Dorsolateral prefrontal cortex (tissue), 120 donors: ENCODE measurements at regions of chr15 and their contacts with region 1.

Region 1: GRCh38 chr15:33660151-33660550 is 308.1 kb upstream of the CHRM5 start:
- DNase-seq: no peak
- H3K4me3 ChIP-seq: no peak overlapping the region
- H3K27ac ChIP-seq: no peak overlapping the region
- H3K27me3 ChIP-seq: peaks cover 0 to 3% (median 0%) of the 10 kb centered on the region in 45 donors
- CTCF ChIP-seq: no peak

Region 2: GRCh38 chr15:33453761-33454160 is 206.4 kb before region 1 on chr15:
- intact Hi-C with region 1: loop called in 1 of 2 experiments (anchors 10 kb)
- DNase-seq: no peak
- H3K4me3 ChIP-seq: no peak overlapping the region
- H3K27ac ChIP-seq: no peak overlapping the region
- H3K27me3 ChIP-seq: no peaks in the 10 kb centered on the region
- CTCF ChIP-seq: no peak

Region 3: DNA sequence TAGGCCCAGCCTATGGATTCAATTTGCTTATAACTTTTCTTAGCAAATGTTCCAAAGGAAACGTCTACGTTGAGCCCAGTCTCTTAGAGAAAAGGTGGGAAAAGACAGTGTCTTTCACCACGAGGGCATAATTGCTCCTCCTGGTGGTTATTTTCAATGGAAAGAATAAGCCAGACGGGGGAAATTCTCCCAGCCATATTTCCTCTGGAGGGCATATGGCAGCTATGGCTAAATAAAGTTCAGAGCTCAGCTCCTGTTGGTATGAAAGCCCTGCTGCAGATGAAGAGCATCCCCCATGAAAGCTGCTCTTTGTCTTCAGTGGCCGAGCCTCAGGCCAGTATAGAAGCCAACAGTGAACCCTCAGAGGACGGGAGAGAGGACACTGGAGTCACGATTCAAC is 51.4 kb before region 1 on chr15:
- intact Hi-C with region 1: loop called in 1 of 2 experiments (anchors 10 kb)
- DNase-seq: no peak
- H3K4me3 ChIP-seq: no peak overlapping the region
- H3K27ac ChIP-seq: no peak overlapping the region
- H3K27me3 ChIP-seq: peaks cover 0 to 3% (median 0%) of the 10 kb centered on the region in 45 donors
- CTCF ChIP-seq: peak in 26 of 56 donors; percentile 5 to 51 (median 25)